Sigmoid colon (tissue), 7 donors: ENCODE measurements at regions of chr2 and their contacts with region 1.

Region 1: DNA sequence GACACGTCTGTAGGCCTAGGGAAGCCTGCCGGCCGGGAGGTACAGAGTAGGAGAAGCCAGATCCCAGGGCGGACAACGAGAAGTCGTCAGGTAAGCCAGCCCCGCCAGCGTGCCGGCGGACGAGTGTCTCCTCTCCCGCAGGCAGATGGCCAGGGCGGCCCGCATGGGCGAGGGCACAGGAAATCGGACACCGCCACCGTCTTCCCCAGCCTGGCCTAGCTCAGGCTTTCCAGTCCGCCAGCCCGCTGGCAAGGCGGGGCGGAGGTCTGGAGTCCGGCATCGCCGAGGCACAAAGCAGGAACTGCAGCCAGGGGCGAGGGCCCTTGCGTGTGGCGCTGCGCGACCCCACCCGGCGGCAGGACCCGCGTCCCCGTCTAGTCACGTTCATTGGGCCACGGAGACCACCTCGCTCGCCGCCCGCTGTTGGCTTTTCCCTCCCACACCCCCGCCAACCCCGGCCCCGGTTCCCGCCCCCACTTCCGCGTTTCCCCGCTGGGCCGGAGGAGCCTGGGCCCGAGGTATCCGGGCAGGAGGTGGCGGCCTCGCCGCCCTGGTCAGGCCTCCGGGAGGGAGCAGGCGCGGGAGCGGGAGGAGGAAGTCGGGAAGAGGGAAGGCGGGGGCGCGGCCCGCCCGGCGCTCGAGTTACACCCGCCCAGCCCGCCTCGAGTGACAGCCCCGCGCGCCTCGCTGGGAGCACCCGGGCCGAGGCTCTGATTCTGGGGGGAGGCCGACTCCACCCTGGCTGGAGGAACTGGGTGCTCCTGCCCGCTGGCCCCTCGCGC is at the start of gene GPD2:
- DNase-seq: peak; percentile 95
- H3K4me3 ChIP-seq: peak within 1 kb of the TSS; percentile 53 to 82 (median 72)
- H3K27ac ChIP-seq: peak within 1 kb of the TSS; percentile 96 to 99 (median 98)
- H3K4me1 ChIP-seq: peaks cover 0 to 29% (median 21%) of the 10 kb centered on the region in 4 donors
- H3K27me3 ChIP-seq: no peaks in the 10 kb centered on the region
- CTCF ChIP-seq: no peak
- EP300 ChIP-seq: no peak
- POLR2A ChIP-seq: peak in 1 of 2 donors; percentile 71
- total RNA-seq, gene GPD2: 15.0 to 44.6 (median 17.9) TPM

Region 2: DNA sequence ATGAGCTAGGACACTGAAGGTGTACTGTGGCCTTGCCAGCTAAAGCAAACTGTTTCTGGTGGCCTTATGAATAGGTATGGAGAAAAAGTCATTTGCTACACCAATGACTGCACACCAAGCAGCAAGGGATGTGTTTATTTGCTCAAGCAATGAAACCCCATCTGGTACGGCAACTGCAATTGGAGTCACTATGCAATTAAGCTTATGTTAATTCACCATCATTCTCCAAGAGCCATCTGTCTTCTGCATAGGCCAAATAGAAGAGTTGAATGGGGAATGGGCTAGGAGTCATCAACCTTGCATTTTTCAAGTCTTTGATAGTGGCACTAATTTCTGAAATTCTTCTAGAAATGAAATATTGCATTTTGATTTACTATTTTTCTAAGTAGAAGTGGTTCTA is 1365.4 kb before region 1 on chr2:
- intact Hi-C with region 1: no loop called
- DNase-seq: no peak
- H3K4me3 ChIP-seq: no peak overlapping the region
- H3K27ac ChIP-seq: no peak overlapping the region
- H3K4me1 ChIP-seq: no peaks in the 10 kb centered on the region
- H3K27me3 ChIP-seq: no peaks in the 10 kb centered on the region
- CTCF ChIP-seq: no peak
- EP300 ChIP-seq: no peak
- POLR2A ChIP-seq: no peak

Region 3: GRCh38 chr2:156332534-156333273 is 103.2 kb before region 1 on chr2 and contains the start of gene NR4A2:
- intact Hi-C with region 1: loop called (anchors 2 kb)
- DNase-seq: peak; percentile 97
- H3K4me3 ChIP-seq: peak within 1 kb of the TSS; percentile 71 to 83 (median 74)
- H3K27ac ChIP-seq: peak within 1 kb of the TSS; percentile 98 to 100 (median 98)
- H3K4me1 ChIP-seq: peaks cover 0 to 32% (median 3%) of the 10 kb centered on the region in 4 donors
- H3K27me3 ChIP-seq: peaks cover 0 to 26% (median 0%) of the 10 kb centered on the region in 3 donors
- CTCF ChIP-seq: no peak
- EP300 ChIP-seq: peak; percentile 37 to 86 (median 72)
- POLR2A ChIP-seq: peak; percentile 71 to 89
- total RNA-seq, gene NR4A2: 1.8 to 5.0 (median 2.6) TPM

Region 4: DNA sequence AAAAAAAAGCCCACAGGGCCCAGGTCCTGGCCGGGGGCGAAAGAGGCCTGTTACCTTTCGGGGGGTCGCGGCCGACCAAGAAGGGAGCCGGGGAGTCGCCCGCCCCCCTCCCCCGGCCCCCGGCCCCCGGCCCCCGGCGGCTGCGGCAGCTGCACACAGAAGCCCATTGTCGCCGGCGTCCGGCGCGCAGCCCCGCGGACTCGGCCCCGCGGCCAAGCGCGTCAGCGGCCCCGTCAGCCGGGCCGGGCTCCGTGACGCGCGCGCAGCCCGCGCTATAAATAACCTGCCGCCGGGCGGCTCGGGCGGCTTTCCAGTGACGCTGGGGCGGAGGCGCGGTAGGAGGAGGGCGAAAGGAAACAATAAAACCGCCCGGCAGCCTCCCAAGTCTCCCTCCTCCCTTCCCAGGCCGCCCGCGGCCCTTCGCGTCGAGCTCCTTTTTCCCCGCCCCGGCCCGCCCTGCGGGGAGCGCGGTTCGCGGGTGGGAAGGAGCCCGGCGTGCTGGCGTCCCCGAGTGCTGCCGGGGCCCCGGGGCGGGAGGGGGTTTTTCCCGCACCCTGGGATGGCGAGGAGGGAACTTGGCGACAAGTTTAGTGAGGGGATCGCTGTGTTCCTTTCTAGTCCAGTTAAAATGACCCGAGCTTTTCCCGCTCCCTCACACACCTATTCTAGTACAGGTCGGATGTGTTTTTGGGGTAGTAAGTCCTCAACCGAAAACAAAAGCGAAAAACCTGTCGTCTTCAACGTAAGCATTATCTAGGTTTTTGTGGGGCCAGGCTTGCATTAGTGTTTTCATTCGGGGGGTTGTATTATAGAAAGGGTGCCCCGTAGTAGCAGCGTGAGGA is 93.4 kb before region 1 on chr2:
- intact Hi-C with region 1: loop called (anchors 1 kb)
- DNase-seq: peak; percentile 99
- H3K4me3 ChIP-seq: peak overlapping the region; percentile 78 to 99 (median 93)
- H3K27ac ChIP-seq: peak overlapping the region; percentile 97 to 100 (median 100)
- H3K4me1 ChIP-seq: peaks cover 0 to 12% (median 11%) of the 10 kb centered on the region in 4 donors
- H3K27me3 ChIP-seq: no peaks in the 10 kb centered on the region
- CTCF ChIP-seq: no peak
- EP300 ChIP-seq: peak; percentile 68 to 89 (median 81)
- POLR2A ChIP-seq: peak; percentile 51 to 75

Region 5: GRCh38 chr2:156400706-156401678 is 34.9 kb before region 1 on chr2:
- intact Hi-C with region 1: loop called (anchors 1 kb)
- DNase-seq: peak; percentile 89
- H3K4me3 ChIP-seq: peak overlapping the region; percentile 60 to 73 (median 64)
- H3K27ac ChIP-seq: peak overlapping the region; percentile 89 to 94 (median 90)
- H3K4me1 ChIP-seq: peaks cover 3 to 8% (median 5%) of the 10 kb centered on the region in 4 donors
- H3K27me3 ChIP-seq: no peaks in the 10 kb centered on the region
- CTCF ChIP-seq: no peak
- EP300 ChIP-seq: no peak
- POLR2A ChIP-seq: no peak

Region 6: GRCh38 chr2:156470975-156471583 is 35.2 kb after region 1 on chr2:
- intact Hi-C with region 1: loop called (anchors 2 kb)
- DNase-seq: no peak
- H3K4me3 ChIP-seq: no peak overlapping the region
- H3K27ac ChIP-seq: peak overlapping the region in 2 of 4 donors; percentile 16 to 25
- H3K4me1 ChIP-seq: peaks cover 0 to 43% (median 31%) of the 10 kb centered on the region in 4 donors
- H3K27me3 ChIP-seq: no peaks in the 10 kb centered on the region
- CTCF ChIP-seq: no peak
- EP300 ChIP-seq: no peak
- POLR2A ChIP-seq: no peak

Region 7: GRCh38 chr2:156573710-156574109 is 137.8 kb after region 1 on chr2:
- intact Hi-C with region 1: no loop called
- DNase-seq: no peak
- H3K4me3 ChIP-seq: no peak overlapping the region
- H3K27ac ChIP-seq: no peak overlapping the region
- H3K4me1 ChIP-seq: no peaks in the 10 kb centered on the region
- H3K27me3 ChIP-seq: no peaks in the 10 kb centered on the region
- CTCF ChIP-seq: no peak
- EP300 ChIP-seq: no peak
- POLR2A ChIP-seq: no peak

Region 8: DNA sequence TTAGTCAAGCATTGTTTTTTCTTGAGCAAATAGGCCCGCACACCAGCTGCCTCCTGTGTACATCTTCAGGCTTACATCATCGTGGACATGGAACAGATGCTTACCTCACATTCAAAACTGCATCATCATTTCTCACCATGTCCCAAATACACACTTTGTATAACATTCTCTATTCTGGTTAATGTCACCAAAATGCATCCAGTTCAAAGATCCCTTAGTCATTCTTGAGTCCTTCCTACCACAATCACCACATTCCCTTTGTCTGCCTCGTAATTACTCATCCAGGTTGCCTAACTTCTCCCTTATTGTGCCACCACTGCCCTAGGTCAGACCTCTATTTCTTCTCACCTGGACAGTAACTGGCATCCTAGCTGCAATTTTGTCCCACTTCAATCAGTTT is 447.9 kb after region 1 on chr2:
- intact Hi-C with region 1: no loop called
- DNase-seq: no peak
- H3K4me3 ChIP-seq: no peak overlapping the region
- H3K27ac ChIP-seq: no peak overlapping the region
- H3K4me1 ChIP-seq: no peaks in the 10 kb centered on the region
- H3K27me3 ChIP-seq: no peaks in the 10 kb centered on the region
- CTCF ChIP-seq: no peak
- EP300 ChIP-seq: no peak
- POLR2A ChIP-seq: no peak